Activated T-helper 1 cell treated with anti-CD3 and anti-CD28 coated beads, Interleukin-12 subunit alpha, Interleukin-12 subunit beta, Interleukin-2, Interleukin-4 antibody, amounts not matched to agents 30 ng/mL and 10 ng/mL and 1 ng/mL, durations not matched to agents 14 hours and 24 hours and 36 hours (primary cell): ENCODE measurements at regions of chrX and their contacts with region 1.

Region 1: DNA sequence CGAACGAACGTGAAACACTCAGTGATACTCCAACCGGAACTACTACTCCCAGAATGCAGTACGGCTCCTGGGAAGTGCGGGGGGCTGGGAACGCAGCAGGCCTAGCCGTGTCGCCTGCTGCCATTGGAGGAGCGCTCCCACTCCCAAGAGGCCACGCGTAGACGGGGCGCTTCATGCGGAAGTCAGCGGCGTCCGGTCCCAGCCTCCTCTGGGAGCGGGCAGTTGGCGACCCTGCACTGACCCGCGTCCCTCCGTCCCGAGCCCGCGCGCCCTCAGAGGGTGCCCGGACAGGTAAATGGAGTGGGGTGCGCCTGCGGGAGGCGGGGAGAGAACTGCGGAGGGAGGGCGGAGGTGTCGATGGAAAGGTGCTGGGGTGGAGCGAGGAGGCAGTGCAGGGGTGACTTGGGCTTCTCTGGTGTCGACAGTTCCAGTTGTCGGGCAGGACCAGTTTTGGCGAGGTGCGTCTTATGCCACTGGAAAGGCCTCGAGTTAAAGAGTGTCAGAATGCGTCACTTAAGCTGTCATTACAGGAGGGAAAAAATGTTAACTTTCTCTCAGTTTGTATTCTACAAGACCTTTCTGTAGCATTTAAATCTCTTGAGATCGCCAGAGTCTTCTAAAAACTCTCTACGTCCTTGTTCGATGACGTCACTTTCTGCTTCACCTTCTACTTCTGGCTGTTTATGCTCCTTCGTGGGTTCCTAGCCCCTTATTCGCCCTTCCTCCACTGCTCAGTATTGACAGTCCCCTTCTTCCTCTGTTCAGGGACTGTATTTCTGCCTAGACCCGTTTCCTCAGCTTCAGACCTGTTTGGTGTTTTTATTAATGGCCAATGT is at the start of gene VAMP7:
- DNase-seq: peak; percentile 74
- H3K4me3 Mint-ChIP-seq: peak within 1 kb of the TSS; percentile 92
- H3K27ac Mint-ChIP-seq: peak within 1 kb of the TSS; percentile 87
- H3K4me1 Mint-ChIP-seq: peaks cover 20% of the 10 kb centered on the region
- H3K27me3 Mint-ChIP-seq: no peaks in the 10 kb centered on the region
- total RNA-seq, gene VAMP7: 27.4 and 32.8 TPM in 2 replicates

Region 2: GRCh38 chrX:155001873-155002272 is 879.5 kb before region 1 on chrX:
- intact Hi-C with region 1: no loop called
- DNase-seq: no peak
- H3K4me3 Mint-ChIP-seq: no peak overlapping the region
- H3K27ac Mint-ChIP-seq: no peak overlapping the region
- H3K4me1 Mint-ChIP-seq: no peaks in the 10 kb centered on the region
- H3K27me3 Mint-ChIP-seq: peaks cover 7% of the 10 kb centered on the region

Region 3: GRCh38 chrX:155263854-155264628 is 617.3 kb before region 1 on chrX and contains the start of gene RAB39B:
- intact Hi-C with region 1: loop called (anchors 1 kb)
- DNase-seq: peak; percentile 61
- H3K4me3 Mint-ChIP-seq: peak within 1 kb of the TSS; percentile 91
- H3K27ac Mint-ChIP-seq: peak within 1 kb of the TSS; percentile 57
- H3K4me1 Mint-ChIP-seq: peaks cover 22% of the 10 kb centered on the region
- H3K27me3 Mint-ChIP-seq: no peaks in the 10 kb centered on the region
- total RNA-seq, gene RAB39B: 11.4 and 12.5 TPM in 2 replicates

Region 4: GRCh38 chrX:155841232-155841631 is 40.1 kb before region 1 on chrX:
- intact Hi-C with region 1: no loop called
- DNase-seq: no peak
- H3K4me3 Mint-ChIP-seq: no peak overlapping the region
- H3K27ac Mint-ChIP-seq: no peak overlapping the region
- H3K4me1 Mint-ChIP-seq: no peaks in the 10 kb centered on the region
- H3K27me3 Mint-ChIP-seq: peaks cover 3% of the 10 kb centered on the region